ENCODE measurements at regions of chr2 and their contacts with region 1.

Region 1: GRCh38 chr2:24315669-24316068 is 44.7 kb downstream of the ITSN2 start:
- DNase-seq: peak; percentile 33
- H3K4me3 Mint-ChIP-seq: no peak overlapping the region
- H3K27ac Mint-ChIP-seq: peak overlapping the region; percentile 35
- H3K4me1 Mint-ChIP-seq: peaks cover 31% of the 10 kb centered on the region
- H3K27me3 Mint-ChIP-seq: no peaks in the 10 kb centered on the region

Region 2: DNA sequence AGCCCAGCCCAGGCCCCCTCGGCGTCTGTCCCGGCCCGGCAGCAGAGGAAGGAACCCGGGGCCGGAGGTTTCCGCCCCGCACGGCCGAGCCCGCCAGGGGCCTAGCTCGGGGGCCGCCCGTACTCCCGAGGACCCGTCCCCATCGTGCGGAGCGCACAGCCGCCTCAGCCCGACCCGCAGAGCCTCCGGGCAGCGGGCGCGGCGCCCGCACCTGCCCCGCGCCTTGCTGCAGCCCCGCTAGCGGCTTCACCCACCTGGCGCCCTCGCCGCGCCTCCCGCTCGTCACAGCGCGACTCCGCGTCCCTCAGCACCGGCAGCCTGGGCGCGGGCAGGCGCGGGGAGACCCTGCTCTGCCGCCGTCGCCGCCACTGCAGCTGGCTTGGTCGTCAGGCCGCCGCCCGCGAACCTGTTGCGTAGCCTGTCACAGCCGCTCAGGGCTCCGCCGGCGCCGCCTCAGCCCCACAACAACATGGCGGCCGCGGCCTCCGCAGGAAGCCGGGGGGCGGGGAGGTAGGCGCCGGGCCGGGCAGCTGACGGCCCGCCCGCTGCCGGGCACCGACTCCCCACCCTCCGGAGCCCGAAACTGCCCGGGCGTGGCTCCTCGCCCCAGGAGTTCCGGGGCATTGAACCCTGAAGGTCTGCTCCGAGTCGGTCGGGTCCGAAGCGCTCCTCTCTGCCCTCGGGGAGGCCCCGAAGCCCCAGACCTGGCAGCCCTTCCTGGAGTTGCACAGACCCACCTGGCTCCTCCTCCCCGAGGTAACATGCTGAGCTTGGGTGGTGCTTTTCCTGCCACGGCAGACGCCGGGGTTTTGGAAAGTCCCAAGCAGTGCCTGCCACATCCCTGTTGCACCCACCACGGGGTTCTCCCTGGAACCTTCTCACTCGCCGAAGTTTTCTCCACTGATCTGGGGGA is 44.6 kb after region 1 on chr2 and contains the start of gene ITSN2:
- CTCF ChIA-PET with region 1: no interaction called
- POLR2A ChIA-PET with region 1: interaction called, 9 read pairs
- intact Hi-C with region 1: loop called (anchors 2 kb)
- DNase-seq: peak; percentile 86
- H3K4me3 Mint-ChIP-seq: peak within 1 kb of the TSS; percentile 85
- H3K27ac Mint-ChIP-seq: peak within 1 kb of the TSS; percentile 92
- H3K4me1 Mint-ChIP-seq: peaks cover 28% of the 10 kb centered on the region
- H3K27me3 Mint-ChIP-seq: no peaks in the 10 kb centered on the region
- total RNA-seq, gene ITSN2: 60.4 to 61.0 TPM

Region 3: DNA sequence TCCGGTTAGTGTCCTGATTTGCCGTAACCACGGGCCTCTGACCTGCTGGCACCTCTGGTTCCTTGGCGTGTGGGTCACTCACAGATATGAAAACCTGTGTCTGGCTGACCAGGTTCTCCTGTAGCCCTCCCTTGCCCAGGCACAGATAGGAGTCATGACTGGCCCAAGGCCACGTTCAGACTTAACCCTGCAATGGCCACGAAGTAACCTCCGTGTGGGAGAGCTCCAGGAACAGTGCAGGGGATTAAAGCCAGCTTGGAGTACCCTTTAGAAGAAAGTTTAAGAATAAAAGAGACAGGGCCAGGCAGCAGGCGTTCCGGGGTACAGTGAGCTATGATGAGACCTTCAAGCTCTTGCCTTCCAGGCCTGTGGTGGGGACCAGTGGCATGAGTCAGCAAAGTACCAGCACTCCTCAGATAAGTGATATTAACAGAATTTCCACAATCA is 503.1 kb after region 1 on chr2:
- CTCF ChIA-PET with region 1: no interaction called
- POLR2A ChIA-PET with region 1: no interaction called
- intact Hi-C with region 1: no loop called
- DNase-seq: no peak
- H3K4me3 Mint-ChIP-seq: no peak overlapping the region
- H3K27ac Mint-ChIP-seq: peak overlapping the region; percentile 25
- H3K4me1 Mint-ChIP-seq: no peaks in the 10 kb centered on the region
- H3K27me3 Mint-ChIP-seq: no peaks in the 10 kb centered on the region

Measured in activated CD4-positive, alpha-beta memory T cell treated with anti-CD3 and anti-CD28 coated beads for 36 hours (primary cell).